WTC11 (cell line): ENCODE measurements at regions of chr11 and their contacts with region 1.

Region 1: GRCh38 chr11:120235024-120235861 is 4.7 kb upstream of the POU2F3 start:
- DNase-seq: peak; percentile 91
- ATAC-seq: peak; percentile 67
- H3K4me3 Mint-ChIP-seq: no peak overlapping the region
- H3K27ac Mint-ChIP-seq: no peak overlapping the region
- H3K4me1 Mint-ChIP-seq: peaks cover 25% of the 10 kb centered on the region
- H3K27me3 Mint-ChIP-seq: peaks cover 31% of the 10 kb centered on the region
- CTCF ChIP-seq: peak; percentile 89

Region 2: DNA sequence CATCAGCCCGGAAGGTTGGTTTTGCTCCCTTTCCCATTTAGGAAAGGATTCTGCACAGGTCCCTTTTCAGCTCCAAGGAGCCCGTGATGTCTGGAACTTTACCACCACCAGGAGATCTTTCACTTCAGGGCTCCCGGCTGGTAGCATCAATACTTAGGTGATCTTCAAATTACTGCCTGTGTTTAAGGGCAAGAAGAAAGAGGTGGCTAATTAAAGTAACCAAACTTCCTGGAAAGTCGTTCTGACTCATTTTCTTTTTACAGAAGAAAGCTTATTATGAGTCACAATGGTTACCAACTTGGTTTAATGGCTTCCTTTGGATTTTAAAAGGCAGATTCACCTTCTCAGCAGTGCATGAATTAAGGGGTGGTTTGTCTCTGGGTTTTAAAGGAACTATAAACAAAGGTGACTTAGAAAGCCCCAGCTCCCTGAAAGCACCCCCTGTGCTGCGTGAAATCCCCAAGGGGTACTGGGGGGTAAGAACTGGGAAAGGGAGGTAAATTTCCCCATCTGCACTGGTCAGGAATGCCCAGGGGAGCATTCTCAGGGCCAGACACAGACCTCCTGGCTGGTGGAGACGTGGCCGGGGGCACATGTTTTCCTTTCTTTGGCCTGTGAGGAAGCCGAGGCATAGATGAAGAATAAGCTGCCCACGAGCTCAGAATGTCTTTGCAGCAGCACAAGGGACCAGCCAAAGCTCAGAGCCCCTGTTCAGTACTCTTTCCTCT is 13.5 kb after region 1 on chr11:
- CTCF ChIA-PET with region 1: interaction called, 26 read pairs
- POLR2A ChIA-PET with region 1: interaction called, 4 read pairs
- DNase-seq: no peak
- ATAC-seq: peak; percentile 18
- H3K4me3 Mint-ChIP-seq: no peak overlapping the region
- H3K27ac Mint-ChIP-seq: 0 out of 2 replicates have a peak overlapping the region, but pooled peaks have one; percentile 13
- H3K4me1 Mint-ChIP-seq: peaks cover 47% of the 10 kb centered on the region
- H3K27me3 Mint-ChIP-seq: peaks cover 56% of the 10 kb centered on the region
- CTCF ChIP-seq: no peak

Region 3: DNA sequence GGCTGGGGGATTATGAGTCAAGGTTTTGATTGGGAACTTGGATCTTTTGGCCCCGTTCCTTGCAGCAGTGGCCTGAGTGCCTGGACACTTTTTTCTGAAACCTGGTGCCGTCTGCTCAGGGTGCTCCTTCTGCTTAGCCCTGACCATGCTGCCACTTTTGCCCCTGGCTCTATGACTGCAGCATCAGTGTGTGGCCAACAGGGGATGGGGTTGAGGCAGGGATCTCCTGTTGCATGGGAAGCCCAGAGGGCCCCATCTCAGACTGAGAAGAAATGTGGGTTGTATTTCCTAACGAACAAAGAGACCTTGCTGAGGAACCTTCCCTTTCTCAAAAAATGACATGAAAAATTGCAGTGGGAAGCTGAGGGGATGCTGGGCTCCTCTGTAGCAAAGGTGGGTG is 23.4 kb after region 1 on chr11:
- CTCF ChIA-PET with region 1: interaction called, 19 read pairs
- POLR2A ChIA-PET with region 1: no interaction called
- DNase-seq: no peak
- ATAC-seq: peak; percentile 15; the same call in 1 of the 2 replicates
- H3K4me3 Mint-ChIP-seq: no peak overlapping the region
- H3K27ac Mint-ChIP-seq: no peak overlapping the region
- H3K4me1 Mint-ChIP-seq: peaks cover 58% of the 10 kb centered on the region
- H3K27me3 Mint-ChIP-seq: peaks cover 59% of the 10 kb centered on the region
- CTCF ChIP-seq: no peak